ENCODE measurements at regions of chr5 and their contacts with region 1.

Region 1: DNA sequence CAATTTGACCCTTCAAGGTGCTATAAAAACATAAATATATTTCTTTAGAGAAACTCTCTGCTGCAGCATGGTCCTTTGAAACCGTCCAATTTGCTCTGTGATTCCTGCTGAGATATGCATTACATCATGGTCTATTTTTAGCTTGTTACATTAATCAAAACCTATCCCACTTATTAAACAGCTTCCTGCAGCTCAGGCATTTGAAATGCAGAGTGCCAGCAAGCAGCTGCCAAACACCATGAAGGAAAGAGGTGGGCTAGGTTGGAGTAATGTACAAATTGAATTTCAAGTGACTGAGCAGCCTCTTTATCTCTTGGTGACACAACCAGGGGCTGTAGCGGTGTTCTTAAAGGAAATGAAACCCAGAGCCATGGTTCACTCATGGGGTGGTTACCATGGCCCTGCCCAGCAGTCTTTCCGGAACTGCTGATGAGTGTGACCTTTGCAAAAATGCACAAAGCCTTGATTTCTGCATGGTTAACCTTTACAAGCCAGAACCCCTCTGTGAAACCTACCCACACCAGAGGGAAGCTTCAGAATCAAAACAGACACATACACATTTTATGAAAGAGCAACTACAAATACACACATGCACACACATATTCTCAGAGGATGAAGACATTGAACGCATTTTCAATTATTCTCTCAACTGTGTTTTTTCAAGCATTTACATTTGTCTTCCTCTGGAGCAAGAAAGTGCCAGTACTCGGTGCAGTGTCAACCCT is 155.8 kb upstream of the ZNF608 start:
- DNase-seq: no peak
- H3K4me3 ChIP-seq: no peak overlapping the region
- H3K27ac ChIP-seq: no peak overlapping the region
- H3K4me1 ChIP-seq: peaks cover 1 to 14% of the 10 kb centered on the region in 2 donors
- H3K27me3 ChIP-seq: no peaks in the 10 kb centered on the region
- CTCF ChIP-seq: no peak

Region 2: DNA sequence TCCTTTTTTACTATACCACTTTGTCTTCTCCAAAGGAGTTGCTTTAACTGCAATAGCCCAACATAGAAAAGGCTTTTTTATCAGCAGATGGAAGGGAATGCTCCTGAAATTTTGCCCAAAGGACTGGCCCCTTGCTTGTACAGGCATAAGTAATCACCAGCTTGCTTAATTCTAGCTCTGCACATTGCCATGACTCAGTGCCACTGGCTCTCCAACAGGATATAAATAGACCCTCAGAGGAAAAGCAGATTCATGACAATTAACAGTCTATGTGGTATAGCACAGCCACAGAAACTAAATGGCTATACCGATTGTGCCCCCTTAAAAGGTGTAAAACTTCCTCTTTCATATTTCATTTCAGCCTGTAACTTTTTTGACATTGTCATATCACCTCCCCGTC is 382.9 kb before region 1 on chr5:
- intact Hi-C with region 1: loop called (anchors 10 kb)
- DNase-seq: peak in 1 of 2 donors; percentile 81
- H3K4me3 ChIP-seq: no peak overlapping the region
- H3K27ac ChIP-seq: peak overlapping the region in 1 of 2 donors; percentile 27
- H3K4me1 ChIP-seq: peaks cover 4 to 15% of the 10 kb centered on the region in 2 donors
- H3K27me3 ChIP-seq: no peaks in the 10 kb centered on the region
- CTCF ChIP-seq: no peak

Region 3: DNA sequence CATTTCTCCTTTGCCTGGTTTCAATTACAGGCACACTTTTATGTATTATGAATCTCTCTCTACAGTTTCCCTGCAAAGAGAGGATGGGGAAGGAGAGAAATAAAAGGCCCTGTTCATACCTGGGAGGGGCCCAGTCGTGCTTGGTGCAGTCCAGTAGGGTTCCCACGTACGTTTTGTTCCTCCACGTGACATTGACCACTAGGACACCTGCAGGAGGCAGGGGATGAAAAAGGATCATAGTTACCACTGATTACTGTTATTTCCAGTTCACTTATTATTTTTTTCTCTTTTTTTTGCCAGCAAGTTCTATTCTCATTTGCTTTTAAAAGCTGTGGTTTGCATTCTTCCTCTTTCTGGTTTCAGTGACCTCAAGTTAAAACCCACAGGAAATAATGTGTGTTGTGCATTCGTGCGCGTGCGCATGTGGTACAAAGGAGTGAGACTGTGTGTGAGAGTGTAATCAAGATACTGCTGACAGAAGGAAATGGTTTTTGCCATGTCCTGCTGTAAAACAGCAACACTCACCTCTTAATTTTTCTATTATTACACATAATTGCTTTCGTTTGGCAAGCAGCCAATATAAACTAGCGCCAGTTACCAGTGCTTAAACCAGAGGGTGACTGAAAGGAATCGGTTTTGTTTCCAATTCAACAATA is 252.6 kb before region 1 on chr5:
- intact Hi-C with region 1: loop called (anchors 10 kb)
- DNase-seq: peak; percentile 46 to 78
- H3K4me3 ChIP-seq: peak overlapping the region; percentile 19 to 55
- H3K27ac ChIP-seq: peak overlapping the region in 1 of 2 donors; percentile 38
- H3K4me1 ChIP-seq: peaks cover 6 to 10% of the 10 kb centered on the region in 2 donors
- H3K27me3 ChIP-seq: no peaks in the 10 kb centered on the region
- CTCF ChIP-seq: no peak

Region 4: DNA sequence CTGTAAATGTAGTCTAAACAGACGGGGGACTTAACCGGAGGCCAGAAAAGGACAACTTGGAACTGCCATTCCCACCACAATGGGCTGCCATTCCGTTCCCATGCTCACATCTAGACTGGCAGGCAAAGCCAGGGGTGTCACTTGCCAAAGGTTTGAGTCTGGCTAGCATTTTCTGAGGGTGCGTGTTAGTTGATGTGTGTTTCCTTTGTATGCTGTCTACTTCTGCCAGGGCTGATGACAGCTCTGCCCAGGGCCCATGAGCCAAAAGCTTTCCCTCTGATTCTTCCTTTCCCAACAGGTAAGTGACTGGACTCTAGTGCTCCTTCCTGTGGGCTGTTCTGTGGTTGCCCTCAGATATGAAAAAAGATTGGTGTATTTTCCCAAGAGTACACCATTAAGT is 223.8 kb before region 1 on chr5:
- intact Hi-C with region 1: no loop called
- DNase-seq: no peak
- H3K4me3 ChIP-seq: no peak overlapping the region
- H3K27ac ChIP-seq: peak overlapping the region; percentile 66 to 78
- H3K4me1 ChIP-seq: peaks cover 12 to 13% of the 10 kb centered on the region in 2 donors
- H3K27me3 ChIP-seq: no peaks in the 10 kb centered on the region
- CTCF ChIP-seq: no peak

Region 5: GRCh38 chr5:124859027-124859426 is 43.2 kb before region 1 on chr5:
- intact Hi-C with region 1: no loop called
- DNase-seq: peak; percentile 21 to 71
- H3K4me3 ChIP-seq: no peak overlapping the region
- H3K27ac ChIP-seq: no peak overlapping the region
- H3K4me1 ChIP-seq: no peaks in the 10 kb centered on the region
- H3K27me3 ChIP-seq: no peaks in the 10 kb centered on the region
- CTCF ChIP-seq: no peak